Mammary epithelial cell (primary cell): ENCODE measurements at regions of chr6 and their contacts with region 1.

Region 1: GRCh38 chr6:56370561-56371211 is 123.3 kb upstream of the COL21A1 start:
- DNase-seq: peak; percentile 92
- H3K4me3 ChIP-seq: peak overlapping the region in 2 of 3 experiments; percentile 3 to 7
- H3K27ac ChIP-seq: peak overlapping the region; percentile 67
- H3K4me1 ChIP-seq: peaks cover 37% of the 10 kb centered on the region
- H3K27me3 ChIP-seq: no peaks in the 10 kb centered on the region
- CTCF ChIP-seq: no peak

Region 2: DNA sequence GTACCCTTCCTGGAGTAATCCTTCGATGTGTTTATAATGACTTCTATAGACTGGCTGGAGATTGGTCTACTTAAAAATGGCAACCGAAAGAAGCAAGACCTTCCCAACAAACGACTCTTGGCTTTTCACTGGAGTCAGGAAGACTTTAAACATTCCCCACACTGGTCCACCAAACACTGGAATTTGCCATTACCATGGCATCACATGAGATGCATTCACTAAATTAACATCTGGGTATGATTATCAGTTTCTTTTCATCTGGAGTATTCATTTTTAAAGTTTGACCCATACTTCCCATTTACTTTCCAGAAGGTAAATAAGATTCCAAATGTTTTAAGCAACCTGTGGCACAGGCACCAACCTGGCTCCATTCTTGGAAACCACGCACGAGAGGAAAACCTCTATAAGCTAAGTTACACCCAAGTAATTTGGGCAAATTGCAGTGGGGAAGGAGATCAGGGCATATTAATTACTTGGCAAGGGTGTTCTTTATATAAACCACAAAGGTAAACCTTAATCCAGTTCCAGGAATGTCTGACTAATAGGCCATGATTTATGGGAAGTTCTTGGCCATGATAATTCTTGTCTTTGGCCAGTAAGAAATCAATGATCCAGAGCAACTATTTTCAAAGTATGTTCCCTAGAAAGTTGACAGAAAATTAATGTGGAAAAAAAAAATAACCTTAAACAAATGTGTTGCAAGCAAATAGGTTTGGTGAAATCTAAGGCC is 66.7 kb after region 1 on chr6:
- CTCF ChIA-PET with region 1: no interaction called
- dilution Hi-C with region 1: no loop called
- in situ Hi-C with region 1: no loop called
- intact Hi-C with region 1: loop called (anchors 5 kb)
- DNase-seq: peak; percentile 71
- H3K4me3 ChIP-seq: no peak overlapping the region
- H3K27ac ChIP-seq: no peak overlapping the region
- H3K4me1 ChIP-seq: peaks cover 31% of the 10 kb centered on the region
- H3K27me3 ChIP-seq: no peaks in the 10 kb centered on the region
- CTCF ChIP-seq: no peak

Region 3: DNA sequence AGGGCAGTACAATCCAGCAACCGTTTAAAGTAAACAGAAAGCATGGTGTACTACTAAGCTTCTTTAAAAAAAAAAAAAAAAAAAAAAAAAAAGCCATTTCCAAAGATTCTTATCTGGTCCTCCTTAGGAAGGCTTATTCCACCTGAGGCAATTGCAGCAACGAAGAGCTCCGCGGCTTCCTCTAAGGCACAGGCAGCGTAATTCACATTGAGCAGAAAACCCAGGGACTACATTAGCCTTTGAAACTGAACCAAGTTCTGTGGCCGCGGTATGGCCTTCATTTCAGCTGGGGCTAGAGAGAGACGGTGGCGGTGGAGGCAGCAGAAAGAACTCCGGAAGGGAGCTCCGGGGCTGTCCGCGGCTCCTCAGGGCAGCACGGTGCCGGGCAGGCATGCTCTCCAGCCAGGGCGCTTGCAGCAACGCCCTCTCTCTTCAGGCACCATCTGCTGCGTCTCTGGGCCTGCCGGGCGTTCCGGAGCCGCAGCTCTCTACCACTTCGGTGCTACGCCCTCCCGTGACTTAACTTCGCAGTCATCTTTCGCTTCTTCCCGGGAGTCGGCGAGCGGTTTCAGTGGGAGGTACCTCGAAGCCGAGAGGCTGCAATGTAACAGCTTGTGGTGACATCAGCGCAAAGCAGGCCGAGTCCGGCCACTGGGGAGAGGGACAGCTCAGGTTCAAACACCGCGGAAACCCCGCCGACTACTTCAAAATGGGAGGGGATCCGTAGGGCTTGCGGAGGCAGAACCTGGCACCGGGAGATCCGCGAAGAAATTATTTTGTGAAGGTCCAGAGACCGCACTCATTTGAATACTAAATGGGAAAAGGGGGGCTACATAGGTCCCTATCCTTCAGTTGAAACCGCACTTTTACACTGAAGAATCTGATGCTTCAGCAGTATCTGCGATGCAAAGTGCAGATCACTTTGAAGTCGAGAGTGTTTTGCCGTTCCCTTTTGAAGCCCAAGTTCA is 172.0 kb after region 1 on chr6:
- CTCF ChIA-PET with region 1: interaction called, 6 read pairs
- dilution Hi-C with region 1: no loop called
- in situ Hi-C with region 1: no loop called
- intact Hi-C with region 1: loop called (anchors 2 kb)
- DNase-seq: peak; percentile 99
- H3K4me3 ChIP-seq: peak overlapping the region; percentile 55 to 64 (median 59)
- H3K27ac ChIP-seq: peak overlapping the region; percentile 96
- H3K4me1 ChIP-seq: peaks cover 18% of the 10 kb centered on the region
- H3K27me3 ChIP-seq: no peaks in the 10 kb centered on the region
- CTCF ChIP-seq: peak in 1 of 2 donors; percentile 33

Region 4: GRCh38 chr6:56570413-56571359 is 200.0 kb after region 1 on chr6:
- CTCF ChIA-PET with region 1: no interaction called
- dilution Hi-C with region 1: no loop called
- in situ Hi-C with region 1: loop called (anchors 10 kb)
- intact Hi-C with region 1: loop called (anchors 1 kb)
- DNase-seq: no peak
- H3K4me3 ChIP-seq: no peak overlapping the region
- H3K27ac ChIP-seq: no peak overlapping the region
- H3K4me1 ChIP-seq: no peaks in the 10 kb centered on the region
- H3K27me3 ChIP-seq: no peaks in the 10 kb centered on the region
- CTCF ChIP-seq: peak; percentile 60 to 68

Region 5: DNA sequence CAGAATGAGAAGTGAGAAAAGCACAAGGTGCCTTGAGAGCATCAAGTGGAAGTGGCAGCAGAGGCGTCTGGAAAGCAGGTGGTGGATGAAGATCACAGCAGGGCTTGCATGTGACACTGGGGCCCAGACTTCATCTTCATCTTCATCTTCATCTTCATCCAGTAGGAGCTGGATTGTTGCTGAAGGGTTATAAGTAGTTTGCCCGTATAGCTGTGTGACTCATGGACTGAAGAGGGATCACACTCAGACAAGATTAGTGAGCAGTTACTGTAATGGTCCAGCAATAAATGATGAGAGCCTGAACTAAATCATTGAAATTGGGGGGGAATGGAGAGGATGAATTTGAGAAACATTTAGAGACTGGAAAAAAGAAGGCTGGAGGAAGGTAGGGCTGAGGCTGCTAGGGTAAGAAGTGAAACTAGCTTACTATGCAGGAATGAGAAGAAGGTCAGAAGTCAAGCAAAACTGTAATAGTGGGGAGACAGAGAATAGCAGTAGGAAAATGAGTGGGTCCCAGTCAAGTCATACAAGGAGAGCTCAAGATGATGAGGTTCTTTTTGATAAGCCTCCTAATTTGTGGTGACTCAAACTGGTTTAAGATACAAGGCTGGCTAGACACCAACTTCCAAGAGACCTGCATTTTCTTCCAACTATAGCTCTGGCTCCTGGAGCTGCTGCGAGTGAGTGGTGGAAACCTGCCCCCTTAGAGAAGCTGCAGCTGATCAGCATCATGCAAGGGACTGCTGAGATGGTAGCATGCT is 491.9 kb after region 1 on chr6:
- CTCF ChIA-PET with region 1: no interaction called
- dilution Hi-C with region 1: no loop called
- in situ Hi-C with region 1: no loop called
- intact Hi-C with region 1: loop called (anchors 10 kb)
- DNase-seq: peak; percentile 27
- H3K4me3 ChIP-seq: no peak overlapping the region
- H3K27ac ChIP-seq: no peak overlapping the region
- H3K4me1 ChIP-seq: peaks cover 52% of the 10 kb centered on the region
- H3K27me3 ChIP-seq: no peaks in the 10 kb centered on the region
- CTCF ChIP-seq: no peak